H1 (cell line): ENCODE measurements at regions of chr11 and their contacts with region 1.

Region 1: GRCh38 chr11:695538-696248 is at the start of gene TMEM80:
- DNase-seq: peak; percentile 91 to 99
- H3K4me3 ChIP-seq: peak within 1 kb of the TSS; percentile 62 to 92 (median 77)
- H3K27ac ChIP-seq: peak within 1 kb of the TSS; percentile 97
- H3K4me1 ChIP-seq: peaks cover 0 to 28% (median 11%) of the 10 kb centered on the region in 4 experiments; a peak in 6 of 7 replicates
- H3K27me3 ChIP-seq: no peaks in the 10 kb centered on the region
- CTCF ChIP-seq: 0 out of 4 replicates have a peak, but pooled peaks of 1 of the 3 experiments have one; percentile 0
- EP300 ChIP-seq: no peak
- POLR2A ChIP-seq: peak in 1 of 2 experiments; percentile 59; a peak in 1 of 3 replicates
- RAD21 ChIP-seq: no peak
- total RNA-seq, gene TMEM80: 7.3 and 8.0 TPM in 2 replicates

Region 2: DNA sequence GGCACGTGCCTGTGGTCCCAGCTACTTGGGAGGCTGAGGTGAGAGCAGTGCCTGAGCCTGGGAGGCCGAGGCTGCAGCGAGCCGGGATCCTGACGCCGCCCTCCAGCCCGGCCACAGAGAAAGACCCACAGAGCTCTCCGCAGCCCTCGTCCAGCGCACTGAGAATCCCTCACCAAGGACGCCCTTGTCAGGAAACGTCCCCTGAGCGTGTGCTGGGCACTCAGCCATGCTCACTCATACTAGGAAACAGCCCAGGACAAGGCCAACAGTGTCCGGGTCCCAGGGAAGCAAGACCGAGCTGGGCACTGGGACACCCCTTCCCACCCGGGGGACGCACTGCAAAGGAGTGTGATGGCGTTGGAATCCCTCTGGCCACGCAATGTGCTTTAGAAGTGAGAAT is 15.2 kb before region 1 on chr11:
- CTCF ChIA-PET with region 1: interaction called, 10 read pairs
- POLR2A ChIA-PET with region 1: interaction called, 9 read pairs
- DNase-seq: no peak
- H3K4me3 ChIP-seq: no peak overlapping the region
- H3K27ac ChIP-seq: no peak overlapping the region
- H3K4me1 ChIP-seq: peaks cover 0 to 2% (median 0%) of the 10 kb centered on the region in 4 experiments; a peak in 3 of 7 replicates
- H3K27me3 ChIP-seq: no peaks in the 10 kb centered on the region
- CTCF ChIP-seq: no peak
- EP300 ChIP-seq: no peak
- POLR2A ChIP-seq: no peak
- RAD21 ChIP-seq: no peak

Region 3: DNA sequence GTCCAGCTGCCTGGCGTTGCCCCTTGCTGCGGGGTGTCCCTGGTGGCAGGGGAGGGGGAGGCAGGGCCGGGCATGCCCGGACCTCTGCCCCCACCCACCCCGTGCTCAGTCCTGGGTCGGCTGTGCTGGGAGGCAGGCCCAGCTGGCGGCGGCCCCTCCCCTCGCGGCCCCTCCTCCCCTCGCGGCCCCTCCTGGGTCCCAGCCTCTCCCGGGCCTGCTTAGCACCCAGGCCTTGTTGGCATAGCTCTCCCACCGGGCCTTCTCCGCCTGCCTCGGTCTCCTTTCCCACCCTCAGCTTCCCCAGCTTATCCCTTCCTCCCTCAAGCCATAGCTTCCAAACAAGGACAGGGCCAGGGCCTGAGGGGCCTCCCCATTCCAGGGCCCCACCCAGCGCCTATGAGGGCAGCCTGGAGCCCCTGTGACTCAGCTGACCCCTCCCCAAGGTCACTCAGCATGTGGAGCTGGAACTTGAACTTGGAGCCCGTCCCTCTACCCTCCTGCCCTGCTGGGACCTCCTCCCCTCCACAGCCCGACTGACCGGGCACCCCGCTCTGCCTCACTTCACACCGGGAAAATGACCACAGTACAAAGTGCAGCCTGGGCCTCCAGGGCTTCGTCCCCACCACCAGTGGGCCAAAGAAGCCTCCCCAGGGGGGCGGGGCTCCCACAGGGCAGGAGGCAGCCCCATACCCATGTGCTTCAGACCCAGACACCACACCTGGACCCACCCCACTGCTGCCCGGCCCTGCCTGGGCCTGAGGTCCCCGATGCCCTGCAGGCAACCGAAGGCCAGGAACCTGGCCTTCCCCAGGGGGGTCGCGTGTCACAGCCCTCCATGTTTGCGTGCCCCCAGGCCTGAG is 11.5 kb after region 1 on chr11:
- CTCF ChIA-PET with region 1: interaction called, 22 read pairs
- POLR2A ChIA-PET with region 1: interaction called, 16 read pairs
- DNase-seq: no peak
- H3K4me3 ChIP-seq: peak overlapping the region; percentile 38 to 64 (median 49)
- H3K27ac ChIP-seq: no peak overlapping the region
- H3K4me1 ChIP-seq: peaks cover 0 to 48% (median 33%) of the 10 kb centered on the region in 4 experiments; a peak in 6 of 7 replicates
- H3K27me3 ChIP-seq: no peaks in the 10 kb centered on the region
- CTCF ChIP-seq: no peak; a peak in 1 of 4 replicates
- EP300 ChIP-seq: no peak
- POLR2A ChIP-seq: no peak
- RAD21 ChIP-seq: no peak

Region 4: GRCh38 chr11:1060824-1061616 is 365.3 kb after region 1 on chr11:
- CTCF ChIA-PET with region 1: no interaction called
- POLR2A ChIA-PET with region 1: no interaction called
- DNase-seq: no peak
- H3K4me3 ChIP-seq: no peak overlapping the region
- H3K27ac ChIP-seq: no peak overlapping the region
- H3K4me1 ChIP-seq: no peaks in the 10 kb centered on the region
- H3K27me3 ChIP-seq: no peaks in the 10 kb centered on the region
- CTCF ChIP-seq: no peak
- EP300 ChIP-seq: no peak
- POLR2A ChIP-seq: no peak
- RAD21 ChIP-seq: no peak